ENCODE measurements at regions of chr6 and their contacts with region 1.

Region 1: GRCh38 chr6:165729307-165729936 is 66.4 kb upstream of the PDE10A start:
- DNase-seq: no peak
- H3K4me3 ChIP-seq: no peak overlapping the region
- H3K27ac ChIP-seq: no peak overlapping the region
- H3K27me3 ChIP-seq: peaks cover 3% of the 10 kb centered on the region
- CTCF ChIP-seq: peak; percentile 75

Region 2: DNA sequence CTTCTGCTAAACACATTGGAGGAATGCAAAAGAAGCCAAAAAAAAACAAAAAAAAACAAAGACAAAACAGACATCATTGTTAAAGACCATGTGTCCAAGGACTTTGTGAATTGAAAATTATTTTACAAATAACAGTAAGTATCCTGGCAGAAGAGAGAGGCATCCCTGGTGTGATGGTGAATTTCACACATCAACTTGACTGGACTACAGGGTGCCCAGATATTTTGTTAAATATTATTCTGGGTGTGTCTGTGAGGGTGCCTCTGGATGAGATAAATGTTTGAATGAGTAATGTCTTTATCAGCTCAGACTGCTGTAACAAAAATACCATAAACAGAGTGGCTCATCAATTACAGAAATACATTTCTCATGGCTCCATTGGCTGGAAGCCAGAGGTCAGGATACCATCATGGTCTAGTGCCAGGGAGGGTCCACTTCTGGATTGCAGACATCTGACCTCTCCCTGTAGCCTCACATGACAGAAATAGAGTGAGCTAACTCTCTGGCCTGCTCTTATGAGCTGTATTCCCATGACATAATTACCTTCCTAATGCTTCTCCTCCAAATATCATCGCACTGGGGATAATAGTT is 407.8 kb before region 1 on chr6:
- CTCF ChIA-PET with region 1: no interaction called
- POLR2A ChIA-PET with region 1: no interaction called
- DNase-seq: no peak
- H3K4me3 ChIP-seq: no peak overlapping the region
- H3K27ac ChIP-seq: no peak overlapping the region
- H3K27me3 ChIP-seq: no peaks in the 10 kb centered on the region
- CTCF ChIP-seq: no peak

Region 3: GRCh38 chr6:165744555-165745228 is 15.3 kb after region 1 on chr6:
- CTCF ChIA-PET with region 1: interaction called, 12 read pairs
- POLR2A ChIA-PET with region 1: no interaction called
- DNase-seq: no peak
- H3K4me3 ChIP-seq: no peak overlapping the region
- H3K27ac ChIP-seq: no peak overlapping the region
- H3K27me3 ChIP-seq: no peaks in the 10 kb centered on the region
- CTCF ChIP-seq: no peak

Region 4: GRCh38 chr6:166058064-166058739 is 328.8 kb after region 1 on chr6:
- CTCF ChIA-PET with region 1: no interaction called
- POLR2A ChIA-PET with region 1: no interaction called
- DNase-seq: peak; percentile 11
- H3K4me3 ChIP-seq: no peak overlapping the region
- H3K27ac ChIP-seq: no peak overlapping the region
- H3K27me3 ChIP-seq: no peaks in the 10 kb centered on the region
- CTCF ChIP-seq: no peak

Measured in AG04450 (cell line).